ENCODE measurements at regions of chr11 and their contacts with region 1.

Region 1: GRCh38 chr11:44793350-44794090 is 66.8 kb downstream of the TSPAN18 start:
- DNase-seq: no peak
- H3K4me3 ChIP-seq: no peak overlapping the region
- H3K27ac ChIP-seq: no peak overlapping the region
- H3K27me3 ChIP-seq: peaks cover 51% of the 10 kb centered on the region
- CTCF ChIP-seq: no peak

Region 2: DNA sequence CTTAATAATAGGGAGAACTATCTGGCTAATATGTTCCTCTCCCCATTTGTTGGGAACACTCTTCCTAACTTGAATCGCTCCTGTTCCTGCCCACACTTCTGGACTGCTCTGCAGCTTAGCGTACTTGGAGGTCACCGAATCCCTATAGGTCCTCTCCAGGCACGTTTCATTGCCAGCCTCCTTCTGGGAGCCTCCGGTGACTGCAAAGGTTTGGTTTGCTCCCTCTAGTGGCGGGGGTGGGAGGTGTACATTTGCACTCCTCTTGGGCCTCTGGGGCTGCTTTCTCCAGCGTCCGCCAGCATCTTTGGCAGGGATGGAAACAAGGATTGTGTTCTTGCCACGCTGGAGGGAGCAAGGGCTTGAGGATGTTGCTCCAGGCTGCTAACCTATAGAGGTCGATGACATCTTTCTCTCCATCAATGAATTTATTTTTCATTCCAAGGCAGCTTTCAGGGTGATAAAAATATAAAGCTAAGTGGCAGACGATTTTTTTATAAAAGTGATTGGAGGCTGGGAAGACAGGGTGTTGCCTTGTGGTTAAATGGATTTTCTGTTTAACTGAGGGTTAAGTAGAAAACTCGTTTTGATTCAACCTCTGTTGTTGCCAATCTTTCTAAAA is 18.0 kb before region 1 on chr11:
- CTCF ChIA-PET with region 1: interaction called, 22 read pairs
- POLR2A ChIA-PET with region 1: interaction called, 4 read pairs
- DNase-seq: no peak
- H3K4me3 ChIP-seq: no peak overlapping the region
- H3K27ac ChIP-seq: no peak overlapping the region
- H3K27me3 ChIP-seq: peaks cover 13% of the 10 kb centered on the region
- CTCF ChIP-seq: peak; percentile 66

Region 3: DNA sequence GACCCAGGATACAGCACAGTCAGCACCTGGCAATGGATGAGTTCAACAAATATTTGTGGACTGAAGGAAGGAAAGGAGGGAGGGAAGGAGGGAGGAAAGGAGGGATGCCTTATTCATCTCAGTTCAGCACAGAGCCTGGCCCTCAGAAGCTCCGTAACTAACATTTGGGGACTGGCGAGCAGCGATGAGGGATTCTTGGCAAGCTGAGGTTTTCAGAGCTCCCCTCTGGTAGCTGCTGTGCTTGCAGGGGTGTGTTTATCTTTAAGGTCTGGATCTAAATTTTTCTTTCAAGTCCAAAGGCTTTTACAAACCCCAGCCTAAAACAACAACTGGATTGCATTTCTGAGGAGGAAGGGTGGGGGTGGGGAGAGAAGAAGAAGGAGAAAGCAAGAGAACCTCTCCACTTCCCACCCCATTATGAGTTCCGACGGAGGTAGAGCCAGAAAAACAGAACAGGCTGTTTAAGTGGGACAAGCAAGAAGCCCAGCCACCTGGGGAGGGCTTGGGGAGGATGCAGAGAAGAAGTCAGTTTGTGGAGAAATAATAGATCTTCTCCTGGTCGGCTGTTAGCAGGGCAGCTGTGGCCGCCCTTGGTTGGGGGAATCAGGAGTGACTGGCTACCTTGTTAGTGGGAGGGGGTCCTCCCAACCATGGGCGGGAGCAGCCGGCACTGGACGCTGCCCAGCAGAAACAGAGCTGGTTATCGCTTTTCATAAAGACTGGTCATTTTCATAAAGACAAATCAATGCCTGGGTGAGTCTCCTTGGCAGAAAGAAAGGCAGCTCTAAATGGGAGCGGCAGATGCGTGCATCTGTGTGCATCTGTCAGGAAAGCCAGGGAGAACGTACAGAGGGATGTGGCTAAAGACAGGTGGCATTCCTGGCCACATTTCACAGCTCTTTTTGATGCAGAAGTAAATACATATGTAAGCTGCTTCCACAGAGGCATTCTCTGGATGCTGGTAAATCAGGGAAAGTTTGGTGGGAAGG is 11.2 kb after region 1 on chr11:
- CTCF ChIA-PET with region 1: no interaction called
- POLR2A ChIA-PET with region 1: interaction called, 19 read pairs
- DNase-seq: no peak
- H3K4me3 ChIP-seq: no peak overlapping the region; the same call in 1 of the 2 replicates
- H3K27ac ChIP-seq: peak overlapping the region; percentile 0
- H3K27me3 ChIP-seq: peaks cover 38% of the 10 kb centered on the region
- CTCF ChIP-seq: 0 out of 2 replicates have a peak, but pooled peaks have one; percentile 17